Posterior vena cava (tissue), 2 donors: ENCODE measurements at regions of chr12 and their contacts with region 1.

Region 1: DNA sequence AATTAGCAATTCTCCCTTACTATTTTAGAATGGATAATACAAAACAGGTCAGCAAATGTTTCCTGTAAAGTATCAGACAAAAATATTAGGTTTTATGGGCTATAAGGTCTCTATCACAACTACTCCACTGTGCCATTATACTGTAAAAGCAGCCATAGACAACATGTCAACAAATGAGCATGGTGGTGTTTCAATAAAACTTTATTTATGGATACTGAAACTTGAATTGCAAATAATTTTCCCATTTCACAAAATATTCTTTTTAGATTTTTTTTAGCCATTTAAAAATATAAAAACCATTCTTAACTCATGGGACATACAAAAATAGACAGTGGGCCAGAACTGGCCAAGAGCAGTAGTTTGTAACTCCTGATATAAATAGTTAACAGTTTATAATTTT is 15.4 kb downstream of the RECQL start:
- DNase-seq: no peak

Region 2: DNA sequence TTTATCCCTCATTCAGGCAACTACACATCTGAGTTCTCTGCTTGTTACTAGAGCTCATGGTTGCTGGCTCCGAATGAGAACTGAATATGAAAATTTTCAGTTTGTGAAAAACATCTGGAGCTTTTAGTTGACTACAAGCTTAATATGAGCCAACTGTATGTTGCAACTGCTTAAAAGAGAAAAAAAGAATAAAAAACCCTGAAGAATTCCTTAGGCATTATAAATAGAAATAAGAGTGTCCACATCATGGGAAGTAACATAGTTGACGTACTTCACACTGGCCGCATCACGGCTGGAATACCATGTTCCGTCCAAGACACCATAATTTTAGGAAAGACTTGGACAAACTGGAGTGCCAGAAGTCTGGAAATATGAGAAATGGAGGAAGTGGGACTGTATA is 1059.8 kb before region 1 on chr12:
- intact Hi-C with region 1: loop called in 1 of 2 experiments (anchors 5 kb)
- DNase-seq: peak; percentile 86